ENCODE measurements at regions of chr17 and their contacts with region 1.

Region 1: GRCh38 chr17:44733753-44734152 is 25.0 kb upstream of the ADAM11 start:
- DNase-seq: no peak
- H3K4me3 ChIP-seq: no peak overlapping the region
- H3K27ac ChIP-seq: no peak overlapping the region
- H3K4me1 ChIP-seq: no peaks in the 10 kb centered on the region
- H3K27me3 ChIP-seq: no peaks in the 10 kb centered on the region
- CTCF ChIP-seq: no peak
- POLR2A ChIP-seq: no peak

Region 2: DNA sequence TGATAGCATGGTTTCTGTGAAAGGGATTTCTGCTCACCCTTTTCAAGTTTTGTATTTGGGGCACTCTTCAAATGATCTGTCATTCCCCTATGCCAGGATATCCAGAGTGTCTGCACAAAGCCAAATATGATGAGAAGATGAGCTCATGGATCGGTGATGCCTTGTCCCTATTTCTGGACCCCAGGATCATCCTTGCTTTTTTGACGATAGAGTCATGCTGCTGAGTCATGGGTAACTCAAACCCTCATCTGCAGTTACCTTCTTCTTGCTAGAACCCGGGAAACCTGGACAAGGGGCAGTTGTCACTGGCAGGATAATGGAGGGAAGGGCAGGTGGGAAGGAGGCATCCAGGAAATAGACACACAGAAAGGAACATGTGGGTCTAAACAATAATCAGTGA is 1142.8 kb after region 1 on chr17:
- intact Hi-C with region 1: loop called (anchors 5 kb)
- DNase-seq: no peak
- H3K4me3 ChIP-seq: no peak overlapping the region
- H3K27ac ChIP-seq: no peak overlapping the region
- H3K4me1 ChIP-seq: no peaks in the 10 kb centered on the region
- H3K27me3 ChIP-seq: no peaks in the 10 kb centered on the region
- CTCF ChIP-seq: no peak
- POLR2A ChIP-seq: no peak

Measured in vagina (tissue), 2 donors.